ENCODE measurements at regions of chr9 and their contacts with region 1.

Region 1: GRCh38 chr9:78369639-78370219 is 72.8 kb downstream of the PSAT1 start:
- DNase-seq: peak; percentile 80 to 93 (median 88)
- H3K4me3 ChIP-seq: no peak overlapping the region
- H3K27ac ChIP-seq: no peak overlapping the region
- H3K4me1 ChIP-seq: no peaks in the 10 kb centered on the region
- H3K27me3 ChIP-seq: no peaks in the 10 kb centered on the region
- CTCF ChIP-seq: peak; percentile 81

Region 2: DNA sequence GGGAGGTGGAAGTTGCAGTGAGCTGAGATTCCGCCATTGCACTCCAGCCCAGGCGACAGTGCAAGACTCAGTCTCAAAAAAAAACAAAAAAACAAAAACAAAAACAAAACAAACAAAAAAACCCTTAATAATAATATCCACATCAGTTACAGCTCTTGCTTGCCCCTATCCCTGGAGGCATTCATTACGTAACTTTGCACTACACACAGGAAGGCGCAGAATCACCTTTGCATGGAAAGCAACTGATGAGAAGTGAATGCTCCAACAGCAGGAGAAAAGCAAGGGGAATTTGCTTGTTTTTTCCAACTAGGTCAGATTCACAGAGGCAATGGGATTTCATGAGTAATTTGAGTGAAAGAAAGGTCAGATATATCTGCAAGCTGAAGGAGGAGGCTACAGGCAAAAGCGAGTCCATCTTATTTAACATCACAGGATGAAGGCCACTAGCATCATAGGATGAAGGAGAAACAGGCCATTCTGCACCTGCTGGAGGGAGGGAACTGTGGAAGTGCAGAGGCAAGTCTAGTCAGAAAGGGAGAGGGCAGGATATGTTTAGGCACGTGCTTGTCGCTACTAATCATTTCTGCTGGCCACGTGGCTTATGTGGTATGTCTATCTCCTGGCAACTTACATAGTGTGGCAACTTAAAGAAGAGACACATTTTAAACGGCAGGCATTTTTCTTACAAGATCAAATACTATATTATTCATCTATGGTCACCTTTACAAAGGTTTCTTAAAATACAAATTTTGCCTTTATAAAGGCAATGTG is 412.3 kb before region 1 on chr9:
- intact Hi-C with region 1: no loop called
- DNase-seq: no peak
- H3K4me3 ChIP-seq: no peak overlapping the region
- H3K27ac ChIP-seq: no peak overlapping the region
- H3K4me1 ChIP-seq: peaks cover 6 to 19% (median 18%) of the 10 kb centered on the region in 3 donors
- H3K27me3 ChIP-seq: no peaks in the 10 kb centered on the region
- CTCF ChIP-seq: no peak

Region 3: DNA sequence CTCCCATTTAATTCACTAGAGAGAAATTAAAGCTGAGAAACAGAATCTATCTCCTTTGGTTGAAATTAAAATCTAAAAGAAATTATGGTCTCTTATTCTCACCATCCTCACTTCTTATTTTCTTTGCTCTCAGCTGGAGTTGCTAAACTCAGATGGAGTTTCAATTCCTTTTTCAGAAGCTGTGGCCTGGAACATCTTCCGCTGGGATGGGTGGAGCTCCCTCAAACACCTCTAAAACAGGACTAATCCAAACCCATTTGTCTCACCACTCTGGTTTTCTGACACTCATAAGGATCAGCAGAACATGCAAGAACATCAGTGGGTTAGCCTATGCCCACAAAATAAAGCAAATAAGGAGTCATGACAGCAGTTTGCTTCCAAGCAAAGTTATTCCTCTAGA is 173.5 kb before region 1 on chr9:
- intact Hi-C with region 1: no loop called
- DNase-seq: no peak
- H3K4me3 ChIP-seq: no peak overlapping the region
- H3K27ac ChIP-seq: no peak overlapping the region
- H3K4me1 ChIP-seq: no peaks in the 10 kb centered on the region
- H3K27me3 ChIP-seq: no peaks in the 10 kb centered on the region
- CTCF ChIP-seq: no peak

Region 4: GRCh38 chr9:78221425-78221824 is 148.3 kb before region 1 on chr9:
- intact Hi-C with region 1: no loop called
- DNase-seq: no peak
- H3K4me3 ChIP-seq: no peak overlapping the region
- H3K27ac ChIP-seq: no peak overlapping the region
- H3K4me1 ChIP-seq: no peaks in the 10 kb centered on the region
- H3K27me3 ChIP-seq: no peaks in the 10 kb centered on the region
- CTCF ChIP-seq: no peak

Region 5: GRCh38 chr9:78252616-78253015 is 117.1 kb before region 1 on chr9:
- intact Hi-C with region 1: loop called (anchors 10 kb)
- DNase-seq: no peak
- H3K4me3 ChIP-seq: no peak overlapping the region
- H3K27ac ChIP-seq: no peak overlapping the region
- H3K4me1 ChIP-seq: no peaks in the 10 kb centered on the region
- H3K27me3 ChIP-seq: no peaks in the 10 kb centered on the region
- CTCF ChIP-seq: no peak